Natural killer cell (primary cell): ENCODE measurements at regions of chr11 and their contacts with region 1.

Region 1: DNA sequence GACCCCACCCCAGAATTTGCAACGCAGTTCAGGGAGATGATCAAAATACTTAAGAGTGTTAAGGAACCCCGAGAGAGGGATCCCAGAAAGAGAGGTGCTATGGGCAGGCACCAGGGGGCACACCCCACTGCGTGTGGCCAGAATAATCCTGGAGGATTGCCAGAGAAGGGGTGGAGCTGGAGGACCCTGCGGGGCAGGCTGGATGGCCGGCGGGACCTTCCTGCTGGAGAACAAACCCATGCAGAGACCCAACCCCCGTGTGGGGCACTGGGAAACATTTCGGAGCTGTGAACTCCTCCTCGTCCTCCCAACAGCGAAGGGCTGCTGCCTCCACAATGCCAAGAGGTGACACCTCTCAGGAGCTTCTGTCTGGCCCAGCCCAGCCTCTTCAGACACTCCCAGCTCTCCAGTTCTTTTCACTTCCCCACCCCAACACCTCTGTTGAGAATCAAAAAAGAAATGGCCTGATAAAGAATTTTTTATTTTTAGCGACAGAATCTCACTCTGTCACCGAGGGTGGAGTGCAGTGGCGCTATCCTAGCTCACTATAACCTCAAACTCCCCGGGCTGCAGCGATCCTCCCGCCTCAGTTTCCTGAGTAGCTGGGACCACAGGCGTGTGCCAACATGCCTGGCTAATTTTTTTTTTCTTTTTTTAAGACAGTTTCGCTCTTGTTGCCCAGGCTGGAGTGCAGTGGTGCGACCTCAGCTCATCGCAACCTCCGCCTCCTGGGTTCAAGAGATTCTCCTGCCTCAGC is 25.6 kb downstream of the RHOD start:
- DNase-seq: peak in 1 of 2 donors; percentile 38
- ATAC-seq: peak in 1 of 3 donors; percentile 17
- H3K4me3 ChIP-seq: no peak overlapping the region
- H3K4me3 Mint-ChIP-seq: peak overlapping the region; percentile 25
- H3K27ac ChIP-seq: no peak overlapping the region
- H3K27ac Mint-ChIP-seq: no peak overlapping the region
- H3K4me1 ChIP-seq: peaks cover 16% of the 10 kb centered on the region
- H3K4me1 Mint-ChIP-seq: peaks cover 6 to 12% of the 10 kb centered on the region in 2 donors
- H3K27me3 ChIP-seq: peaks cover 3% of the 10 kb centered on the region
- H3K27me3 Mint-ChIP-seq: no peaks in the 10 kb centered on the region
- CTCF ChIP-seq: no peak

Region 2: GRCh38 chr11:66920978-66921784 is 161.0 kb before region 1 on chr11:
- intact Hi-C with region 1: no loop called
- DNase-seq: no peak
- ATAC-seq: no peak
- H3K4me3 ChIP-seq: no peak overlapping the region
- H3K4me3 Mint-ChIP-seq: no peak overlapping the region
- H3K27ac ChIP-seq: no peak overlapping the region
- H3K27ac Mint-ChIP-seq: no peak overlapping the region
- H3K4me1 ChIP-seq: no peaks in the 10 kb centered on the region
- H3K4me1 Mint-ChIP-seq: no peaks in the 10 kb centered on the region
- H3K27me3 ChIP-seq: no peaks in the 10 kb centered on the region
- H3K27me3 Mint-ChIP-seq: peaks cover 0 to 6% of the 10 kb centered on the region in 2 donors
- CTCF ChIP-seq: no peak

Region 3: DNA sequence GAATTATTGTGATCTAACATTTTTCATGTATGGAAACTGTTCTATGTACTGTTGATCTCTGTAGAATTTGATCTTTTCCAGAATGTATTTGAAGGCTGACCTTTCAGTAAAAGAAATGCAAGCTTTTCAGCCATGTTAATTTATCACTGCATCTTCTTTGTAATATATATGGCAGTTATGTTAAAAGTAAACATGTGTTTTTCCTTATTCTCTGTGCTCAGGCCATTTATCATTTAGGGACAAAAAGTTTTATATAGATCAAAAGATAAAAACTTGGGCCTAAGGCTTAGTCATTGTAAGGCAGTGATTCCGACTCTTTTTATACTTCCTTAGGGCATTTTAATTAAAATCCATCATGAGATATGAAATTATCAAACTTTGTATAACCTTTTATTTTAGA is 85.5 kb after region 1 on chr11:
- intact Hi-C with region 1: loop called (anchors 1 kb)
- DNase-seq: no peak
- ATAC-seq: no peak
- H3K4me3 ChIP-seq: no peak overlapping the region
- H3K4me3 Mint-ChIP-seq: no peak overlapping the region
- H3K27ac ChIP-seq: no peak overlapping the region
- H3K27ac Mint-ChIP-seq: peak overlapping the region; percentile 54 to 61
- H3K4me1 ChIP-seq: no peaks in the 10 kb centered on the region
- H3K4me1 Mint-ChIP-seq: peaks cover 37 to 57% of the 10 kb centered on the region in 2 donors
- H3K27me3 ChIP-seq: no peaks in the 10 kb centered on the region
- H3K27me3 Mint-ChIP-seq: no peaks in the 10 kb centered on the region
- CTCF ChIP-seq: no peak

Region 4: GRCh38 chr11:67178878-67179277 is 96.7 kb after region 1 on chr11:
- intact Hi-C with region 1: no loop called
- DNase-seq: no peak
- ATAC-seq: no peak
- H3K4me3 ChIP-seq: no peak overlapping the region
- H3K4me3 Mint-ChIP-seq: no peak overlapping the region
- H3K27ac ChIP-seq: no peak overlapping the region
- H3K27ac Mint-ChIP-seq: peak overlapping the region in 1 of 2 donors; percentile 50
- H3K4me1 ChIP-seq: no peaks in the 10 kb centered on the region
- H3K4me1 Mint-ChIP-seq: peaks cover 39 to 46% of the 10 kb centered on the region in 2 donors
- H3K27me3 ChIP-seq: no peaks in the 10 kb centered on the region
- H3K27me3 Mint-ChIP-seq: no peaks in the 10 kb centered on the region
- CTCF ChIP-seq: no peak